Prostate gland (tissue), 2 donors: ENCODE measurements at regions of chr3 and their contacts with region 1.

Region 1: GRCh38 chr3:119891944-119892721 is 110.2 kb downstream of the NR1I2 start:
- DNase-seq: peak; percentile 35
- H3K4me3 ChIP-seq: no peak overlapping the region
- H3K27ac ChIP-seq: no peak overlapping the region
- H3K4me1 ChIP-seq: no peaks in the 10 kb centered on the region
- H3K27me3 ChIP-seq: no peaks in the 10 kb centered on the region
- CTCF ChIP-seq: peak; percentile 40 to 80 (median 76)
- POLR2A ChIP-seq: no peak

Region 2: GRCh38 chr3:119579366-119580165 is 312.6 kb before region 1 on chr3 and contains the start of gene ADPRH:
- intact Hi-C with region 1: no loop called
- DNase-seq: peak; percentile 57
- H3K4me3 ChIP-seq: peak within 1 kb of the TSS; percentile 53 to 58
- H3K27ac ChIP-seq: peak within 1 kb of the TSS; percentile 87 to 89
- H3K4me1 ChIP-seq: no peaks in the 10 kb centered on the region
- H3K27me3 ChIP-seq: no peaks in the 10 kb centered on the region
- CTCF ChIP-seq: no peak
- POLR2A ChIP-seq: peak; percentile 18
- total RNA-seq, gene ADPRH: 8.2 to 14.8 TPM

Region 3: DNA sequence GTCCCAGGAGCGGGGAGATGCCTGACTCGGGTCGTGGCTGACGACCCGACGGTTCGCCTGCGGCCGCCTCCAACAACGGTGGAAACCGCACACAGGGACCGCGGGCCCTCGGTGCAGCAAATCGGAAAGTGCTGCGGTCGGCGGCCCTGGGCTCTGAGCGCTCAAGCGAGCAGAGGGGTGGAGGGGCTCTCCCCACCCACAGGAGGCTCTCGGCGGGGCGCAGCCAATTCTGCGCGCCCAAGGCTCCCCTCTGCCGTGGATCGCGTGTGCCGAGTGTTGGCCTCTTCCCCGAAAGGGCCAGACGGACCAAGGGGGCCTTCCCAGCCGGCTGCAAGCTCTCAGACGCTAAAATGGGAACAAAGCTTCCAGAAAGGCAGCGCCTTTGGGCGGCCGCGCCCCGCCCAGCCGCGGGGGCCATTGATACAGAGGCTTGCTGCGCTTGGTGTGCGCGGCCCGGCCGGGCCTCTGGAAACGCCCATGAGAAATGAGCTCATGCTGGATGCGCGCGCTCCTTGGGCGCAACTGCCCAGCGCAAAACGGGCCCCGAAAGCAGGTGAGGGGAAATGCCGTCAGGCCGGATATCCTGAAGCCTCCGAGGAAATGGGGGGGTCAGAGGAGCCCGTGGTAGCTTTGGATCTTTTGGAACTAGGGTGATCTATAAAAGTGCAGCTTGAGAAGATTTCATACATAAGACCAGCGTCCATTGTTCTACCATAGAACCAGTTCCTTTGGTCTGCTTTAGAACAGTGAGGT is 203.3 kb after region 1 on chr3:
- intact Hi-C with region 1: loop called (anchors 5 kb)
- DNase-seq: peak; percentile 89
- H3K4me3 ChIP-seq: peak overlapping the region; percentile 88 to 91
- H3K27ac ChIP-seq: peak overlapping the region; percentile 100
- H3K4me1 ChIP-seq: peaks cover 6% of the 10 kb centered on the region
- H3K27me3 ChIP-seq: no peaks in the 10 kb centered on the region
- CTCF ChIP-seq: no peak
- POLR2A ChIP-seq: peak; percentile 87

Region 4: DNA sequence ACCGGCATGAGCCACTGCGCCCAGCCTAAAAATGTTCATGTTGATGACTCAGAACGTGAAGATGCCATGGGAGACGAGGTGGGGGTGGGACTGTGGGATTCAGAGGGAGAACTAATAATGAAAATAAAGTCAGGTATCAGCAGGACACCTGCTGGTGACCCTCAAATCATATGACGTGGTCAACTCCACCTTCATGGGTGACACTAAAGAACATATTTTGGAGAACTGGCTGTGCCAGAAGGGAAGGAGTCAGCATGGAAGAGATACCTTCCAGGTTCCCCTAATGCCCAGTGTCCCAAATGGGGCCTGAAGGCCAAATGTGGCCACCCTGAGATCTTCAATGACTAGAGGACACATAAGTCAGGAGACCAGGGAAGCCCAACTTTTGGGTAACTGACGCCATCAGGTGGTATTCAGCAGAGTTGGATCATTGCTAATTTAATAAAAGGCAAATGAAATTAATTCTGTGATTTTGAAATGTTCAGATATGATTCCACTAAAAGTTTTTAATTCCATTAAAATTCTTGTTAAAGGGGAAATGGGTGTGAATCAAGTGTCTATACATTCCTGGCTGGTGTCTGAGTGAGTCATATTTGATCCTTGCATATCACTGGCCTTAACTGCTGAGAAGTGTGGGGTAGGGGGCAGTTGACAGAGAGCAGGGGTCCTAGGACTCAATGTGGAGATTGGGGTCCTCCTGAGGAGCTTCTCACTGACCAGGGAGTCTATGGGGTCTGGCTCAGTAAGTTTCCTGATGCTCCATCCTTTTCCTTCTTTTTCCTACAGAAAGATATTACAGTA is 290.8 kb after region 1 on chr3:
- intact Hi-C with region 1: loop called (anchors 5 kb)
- DNase-seq: peak; percentile 17
- H3K4me3 ChIP-seq: no peak overlapping the region
- H3K27ac ChIP-seq: no peak overlapping the region
- H3K4me1 ChIP-seq: no peaks in the 10 kb centered on the region
- H3K27me3 ChIP-seq: no peaks in the 10 kb centered on the region
- CTCF ChIP-seq: peak in 2 of 4 experiments; percentile 35 to 41
- POLR2A ChIP-seq: no peak